ENCODE measurements at regions of chr1 and their contacts with region 1.

Region 1: GRCh38 chr1:41455479-41456332 is 28.8 kb downstream of the EDN2 start:
- DNase-seq: no peak
- H3K4me3 ChIP-seq: no peak overlapping the region
- H3K27ac ChIP-seq: no peak overlapping the region
- H3K4me1 ChIP-seq: no peaks in the 10 kb centered on the region
- H3K27me3 ChIP-seq: no peaks in the 10 kb centered on the region
- CTCF ChIP-seq: no peak
- EP300 ChIP-seq: no peak
- POLR2A ChIP-seq: no peak
- RAD21 ChIP-seq: no peak

Region 2: GRCh38 chr1:41444246-41444645 is 11.5 kb before region 1 on chr1:
- CTCF ChIA-PET with region 1: interaction called, 12 read pairs
- POLR2A ChIA-PET with region 1: interaction called, 3 read pairs
- DNase-seq: no peak
- H3K4me3 ChIP-seq: no peak overlapping the region
- H3K27ac ChIP-seq: no peak overlapping the region
- H3K4me1 ChIP-seq: no peaks in the 10 kb centered on the region; a peak in 2 of 7 replicates
- H3K27me3 ChIP-seq: no peaks in the 10 kb centered on the region
- CTCF ChIP-seq: peak; percentile 26 to 63 (median 48)
- EP300 ChIP-seq: no peak
- POLR2A ChIP-seq: no peak
- RAD21 ChIP-seq: peak in 1 of 2 experiments; percentile 44; a peak in 2 of 4 replicates

Region 3: DNA sequence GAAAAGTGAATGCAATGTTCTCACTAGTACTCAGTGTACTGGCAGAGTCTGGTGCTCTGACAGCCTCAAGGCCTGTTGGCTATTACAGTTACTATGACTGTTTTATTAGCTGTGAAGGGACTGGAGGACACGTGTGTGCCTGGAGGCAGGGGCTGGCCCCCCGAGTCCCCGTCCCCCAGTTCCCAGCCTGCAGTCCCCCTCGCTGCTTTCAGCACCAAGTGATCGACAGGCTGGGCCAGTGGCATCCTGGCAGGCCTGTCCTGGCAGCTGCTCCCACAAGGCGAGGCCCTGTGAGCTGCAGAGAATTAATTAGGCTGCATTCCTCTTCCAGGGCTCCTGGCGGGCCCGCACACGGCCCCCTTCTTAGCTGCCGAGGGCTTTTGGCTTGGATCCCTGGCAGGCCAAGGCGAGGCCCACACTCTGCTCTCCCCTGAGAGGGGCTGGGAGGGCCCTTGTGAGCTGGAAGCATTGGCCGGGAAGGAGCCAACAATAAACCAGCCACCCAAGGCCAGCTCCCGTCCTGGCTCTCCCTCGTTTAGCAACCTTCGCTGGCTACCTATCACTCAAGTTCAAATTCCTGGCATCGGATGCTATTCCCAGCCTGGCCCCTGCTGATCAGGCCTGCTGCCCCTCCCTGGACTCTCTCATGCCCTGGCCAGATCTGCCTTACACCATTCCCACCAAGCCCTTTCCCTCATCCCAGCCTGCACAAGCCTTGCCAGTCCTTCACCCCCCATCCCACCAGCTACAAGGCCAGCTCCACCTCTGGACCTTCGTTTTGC is 19.0 kb after region 1 on chr1:
- CTCF ChIA-PET with region 1: interaction called, 21 read pairs
- POLR2A ChIA-PET with region 1: interaction called, 3 read pairs
- DNase-seq: no peak
- H3K4me3 ChIP-seq: no peak overlapping the region
- H3K27ac ChIP-seq: no peak overlapping the region
- H3K4me1 ChIP-seq: peaks cover 0 to 5% (median 4%) of the 10 kb centered on the region in 4 experiments; a peak in 2 of 7 replicates
- H3K27me3 ChIP-seq: no peaks in the 10 kb centered on the region
- CTCF ChIP-seq: no peak
- EP300 ChIP-seq: no peak
- POLR2A ChIP-seq: no peak
- RAD21 ChIP-seq: no peak

Region 4: GRCh38 chr1:41496080-41497055 is 40.7 kb after region 1 on chr1:
- CTCF ChIA-PET with region 1: interaction called, 11 read pairs
- POLR2A ChIA-PET with region 1: no interaction called
- DNase-seq: peak; percentile 69 to 88
- H3K4me3 ChIP-seq: peak overlapping the region; percentile 6 to 51 (median 24); a peak in 6 of 8 replicates
- H3K27ac ChIP-seq: peak overlapping the region; percentile 75; the same call in 1 of the 2 replicates
- H3K4me1 ChIP-seq: peaks cover 0 to 23% (median 17%) of the 10 kb centered on the region in 4 experiments; a peak in 6 of 7 replicates
- H3K27me3 ChIP-seq: peaks cover 0 to 13% (median 11%) of the 10 kb centered on the region in 4 experiments; a peak in 3 of 7 replicates
- CTCF ChIP-seq: 0 out of 4 replicates have a peak, but pooled peaks of 1 of the 3 experiments have one; percentile 5
- EP300 ChIP-seq: peak in 1 of 2 experiments; percentile 71; a peak in 1 of 3 replicates
- POLR2A ChIP-seq: no peak; a peak in 1 of 3 replicates
- RAD21 ChIP-seq: no peak

Region 5: GRCh38 chr1:41537788-41538351 is 82.2 kb after region 1 on chr1:
- CTCF ChIA-PET with region 1: no interaction called
- POLR2A ChIA-PET with region 1: no interaction called
- DNase-seq: no peak
- H3K4me3 ChIP-seq: no peak overlapping the region
- H3K27ac ChIP-seq: no peak overlapping the region
- H3K4me1 ChIP-seq: no peaks in the 10 kb centered on the region
- H3K27me3 ChIP-seq: no peaks in the 10 kb centered on the region
- CTCF ChIP-seq: no peak
- EP300 ChIP-seq: no peak
- POLR2A ChIP-seq: no peak
- RAD21 ChIP-seq: no peak

Measured in H1 (cell line).